CD4-positive, alpha-beta T cell (primary cell): ENCODE measurements at regions of chr19 and their contacts with region 1.

Region 1: DNA sequence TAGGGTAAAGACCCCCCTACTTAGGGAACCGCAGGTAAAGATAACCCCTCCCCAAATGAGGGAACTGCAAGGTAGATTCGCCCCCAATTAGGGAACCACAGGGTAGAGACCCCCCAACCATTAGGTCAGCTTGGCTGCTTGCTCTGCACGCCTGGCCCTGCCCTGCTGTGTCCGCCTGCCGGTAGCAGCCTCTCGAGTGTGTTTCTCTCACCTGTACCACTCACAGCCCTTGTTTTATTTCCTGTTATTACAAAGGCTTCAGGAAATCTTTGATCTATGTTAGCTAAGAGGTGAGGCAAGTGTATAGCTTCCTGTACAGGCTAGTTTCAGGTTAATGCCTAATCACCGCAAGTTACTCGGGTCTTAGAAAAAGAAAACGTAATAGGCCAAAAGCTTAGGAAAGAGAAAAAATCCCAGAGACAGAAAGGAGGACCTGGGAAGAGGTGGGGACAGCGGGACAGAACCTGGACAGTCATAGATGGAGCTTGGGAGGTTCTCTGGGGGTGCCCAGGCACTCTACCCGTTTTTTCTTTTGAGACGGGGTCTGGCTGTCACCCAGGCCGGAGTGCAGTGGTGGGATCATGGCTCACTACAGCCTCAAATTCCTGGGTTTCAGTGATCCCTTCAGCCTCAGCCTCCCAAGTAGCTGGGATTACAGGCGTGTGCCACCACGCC is 23.1 kb upstream of the EIF3G start:
- DNase-seq: peak; percentile 38 to 93 (median 58)
- ATAC-seq: peak; percentile 98
- H3K4me3 ChIP-seq: peak overlapping the region; percentile 36
- H3K4me3 Mint-ChIP-seq: peak overlapping the region; percentile 76
- H3K27ac ChIP-seq: peak overlapping the region; percentile 86 to 90
- H3K27ac Mint-ChIP-seq: peak overlapping the region; percentile 95
- H3K4me1 ChIP-seq: peaks cover 76% of the 10 kb centered on the region
- H3K4me1 Mint-ChIP-seq: peaks cover 36% of the 10 kb centered on the region
- H3K27me3 ChIP-seq: no peaks in the 10 kb centered on the region
- H3K27me3 Mint-ChIP-seq: no peaks in the 10 kb centered on the region
- CTCF ChIP-seq: peak; percentile 32

Region 2: DNA sequence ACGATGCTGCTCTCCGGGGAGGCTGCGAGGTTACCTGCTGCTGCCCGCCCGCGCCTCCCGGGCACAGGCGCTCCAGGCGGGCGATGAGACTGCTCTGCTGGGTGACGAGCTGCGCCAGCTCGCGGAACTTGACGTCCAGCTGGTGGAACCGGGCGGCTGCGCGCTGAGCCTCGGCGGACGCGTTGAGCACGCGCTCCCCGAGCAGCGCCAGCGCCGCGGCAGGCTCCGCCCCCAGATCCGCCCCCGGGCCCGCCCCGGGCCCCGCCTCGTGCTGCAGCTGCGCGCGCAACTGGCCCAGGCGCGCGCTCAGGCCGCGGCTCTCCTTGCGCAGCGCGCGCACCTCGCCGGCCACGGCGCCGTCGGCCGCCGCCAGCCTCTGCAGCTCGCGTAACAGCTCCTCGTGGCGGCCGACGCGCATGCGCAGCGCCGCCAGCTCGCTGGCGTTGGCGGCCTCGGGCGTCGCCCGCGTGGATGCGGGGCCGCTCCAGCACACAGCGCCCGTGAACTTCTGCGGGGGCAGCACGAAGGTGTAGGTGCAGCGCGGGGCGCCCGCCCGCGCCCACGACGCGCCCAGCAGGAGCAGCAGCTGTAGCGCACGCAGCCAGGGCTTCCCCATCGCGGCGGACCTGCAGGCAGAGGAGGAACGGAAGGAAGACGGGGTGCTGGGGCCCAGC is 46.8 kb before region 1 on chr19:
- CTCF ChIA-PET with region 1: interaction called, 3 read pairs
- POLR2A ChIA-PET with region 1: interaction called, 23 read pairs
- intact Hi-C with region 1: no loop called
- DNase-seq: peak; percentile 78 to 98 (median 88)
- ATAC-seq: peak; percentile 88
- H3K4me3 ChIP-seq: peak overlapping the region; percentile 53
- H3K4me3 Mint-ChIP-seq: peak overlapping the region; percentile 65
- H3K27ac ChIP-seq: peak overlapping the region; percentile 48 to 56
- H3K27ac Mint-ChIP-seq: peak overlapping the region; percentile 83
- H3K4me1 ChIP-seq: peaks cover 50% of the 10 kb centered on the region
- H3K4me1 Mint-ChIP-seq: peaks cover 22% of the 10 kb centered on the region
- H3K27me3 ChIP-seq: no peaks in the 10 kb centered on the region
- H3K27me3 Mint-ChIP-seq: no peaks in the 10 kb centered on the region
- CTCF ChIP-seq: no peak

Region 3: DNA sequence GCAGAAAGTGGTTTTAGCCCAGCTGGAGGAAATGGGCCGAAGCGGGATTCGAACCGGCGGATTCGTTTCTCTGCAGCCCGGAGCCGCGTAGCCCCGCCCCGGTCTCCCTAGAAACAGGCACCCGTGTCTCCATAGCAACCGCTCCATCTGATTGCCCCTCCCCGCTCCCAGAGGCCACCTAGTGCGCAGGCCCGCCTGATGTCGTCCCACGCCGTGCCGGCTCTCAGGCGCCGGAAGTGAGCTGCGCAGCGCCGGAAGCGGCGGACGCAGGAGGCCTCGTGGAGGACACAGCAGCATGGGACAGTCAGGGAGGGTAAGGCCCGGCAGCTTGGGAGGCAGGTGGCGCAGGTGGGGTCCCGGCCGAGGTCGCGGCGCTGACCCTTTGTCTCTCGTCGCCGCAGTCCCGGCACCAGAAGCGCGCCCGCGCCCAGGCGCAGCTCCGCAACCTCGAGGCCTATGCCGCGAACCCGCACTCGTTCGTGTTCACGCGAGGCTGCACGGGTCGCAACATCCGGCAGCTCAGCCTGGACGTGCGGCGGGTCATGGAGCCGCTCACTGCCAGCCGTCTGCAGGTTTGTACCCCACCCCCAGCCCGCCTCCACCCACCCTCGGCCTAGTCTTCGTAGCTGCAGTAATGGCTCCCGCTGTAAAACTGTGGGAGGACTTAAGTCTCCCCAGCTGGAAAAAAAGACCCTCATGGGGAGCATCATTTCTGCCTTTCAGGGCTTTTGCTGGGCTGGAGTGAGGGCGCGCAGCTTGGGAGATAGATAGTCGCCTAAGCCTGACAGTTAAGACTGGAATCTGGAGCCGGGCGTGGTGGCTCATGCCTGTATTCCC is 36.5 kb before region 1 on chr19 and contains the start of gene PPAN:
- CTCF ChIA-PET with region 1: no interaction called
- POLR2A ChIA-PET with region 1: interaction called, 22 read pairs
- intact Hi-C with region 1: no loop called
- DNase-seq: peak; percentile 94 to 100 (median 98)
- ATAC-seq: peak; percentile 59
- H3K4me3 ChIP-seq: peak within 1 kb of the TSS; percentile 73
- H3K4me3 Mint-ChIP-seq: peak within 1 kb of the TSS; percentile 93
- H3K27ac ChIP-seq: peak within 1 kb of the TSS; percentile 94 to 98
- H3K27ac Mint-ChIP-seq: peak within 1 kb of the TSS; percentile 95
- H3K4me1 ChIP-seq: peaks cover 86% of the 10 kb centered on the region
- H3K4me1 Mint-ChIP-seq: peaks cover 58% of the 10 kb centered on the region
- H3K27me3 ChIP-seq: no peaks in the 10 kb centered on the region
- H3K27me3 Mint-ChIP-seq: no peaks in the 10 kb centered on the region
- CTCF ChIP-seq: no peak
- total RNA-seq, gene PPAN: 119 to 127 TPM

Region 4: DNA sequence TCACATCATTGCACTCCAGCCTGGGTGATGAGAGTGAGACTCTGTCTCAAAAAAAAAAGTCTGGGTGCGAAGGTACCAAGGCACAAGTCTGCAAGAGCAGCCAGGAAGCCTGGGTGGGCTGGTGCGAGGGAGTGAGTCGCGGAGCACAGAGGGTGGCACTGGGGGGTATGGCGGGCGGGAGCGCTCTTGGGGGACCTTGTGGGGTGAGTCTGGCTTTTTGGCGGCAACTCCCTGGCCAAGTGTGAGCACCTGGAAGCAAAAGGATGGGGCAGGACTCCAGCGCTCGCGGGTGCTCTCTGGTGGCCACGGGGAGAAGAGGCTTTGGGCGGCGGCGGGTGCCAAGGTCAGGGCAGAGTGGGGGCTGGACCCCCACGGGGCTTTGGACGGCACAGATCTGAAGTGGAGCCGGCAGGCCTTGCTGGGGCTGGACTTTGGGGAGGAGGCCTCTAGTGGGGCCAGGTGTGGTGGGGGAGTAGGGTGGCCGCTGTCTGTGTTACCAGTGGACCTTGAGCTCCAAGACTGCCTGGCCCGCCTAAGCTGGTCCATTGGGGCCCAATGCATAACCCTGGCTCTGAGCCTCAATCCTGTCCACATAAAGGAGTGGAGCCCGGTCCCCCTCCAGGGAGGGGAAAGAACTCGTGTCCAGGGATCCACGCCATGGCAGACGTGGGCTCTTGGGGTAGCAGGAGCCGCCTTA is 29.8 kb before region 1 on chr19:
- CTCF ChIA-PET with region 1: no interaction called
- POLR2A ChIA-PET with region 1: interaction called, 28 read pairs
- intact Hi-C with region 1: loop called in 1 of 2 experiments (anchors 2 kb)
- DNase-seq: peak; percentile 43 to 83 (median 62)
- ATAC-seq: peak; percentile 41
- H3K4me3 ChIP-seq: no peak overlapping the region
- H3K4me3 Mint-ChIP-seq: peak overlapping the region; percentile 87
- H3K27ac ChIP-seq: peak overlapping the region; percentile 47 to 63
- H3K27ac Mint-ChIP-seq: peak overlapping the region; percentile 98
- H3K4me1 ChIP-seq: peaks cover 80% of the 10 kb centered on the region
- H3K4me1 Mint-ChIP-seq: peaks cover 32% of the 10 kb centered on the region
- H3K27me3 ChIP-seq: no peaks in the 10 kb centered on the region
- H3K27me3 Mint-ChIP-seq: peaks cover 4% of the 10 kb centered on the region
- CTCF ChIP-seq: peak; percentile 59

Region 5: GRCh38 chr19:10120538-10121189 is 22.2 kb before region 1 on chr19:
- CTCF ChIA-PET with region 1: interaction called, 9 read pairs
- POLR2A ChIA-PET with region 1: interaction called, 28 read pairs
- intact Hi-C with region 1: loop called (anchors 2 kb)
- DNase-seq: no peak
- ATAC-seq: no peak
- H3K4me3 ChIP-seq: no peak overlapping the region
- H3K4me3 Mint-ChIP-seq: no peak overlapping the region
- H3K27ac ChIP-seq: no peak overlapping the region
- H3K27ac Mint-ChIP-seq: no peak overlapping the region
- H3K4me1 ChIP-seq: peaks cover 42% of the 10 kb centered on the region
- H3K4me1 Mint-ChIP-seq: peaks cover 11% of the 10 kb centered on the region
- H3K27me3 ChIP-seq: no peaks in the 10 kb centered on the region
- H3K27me3 Mint-ChIP-seq: no peaks in the 10 kb centered on the region
- CTCF ChIP-seq: no peak

Region 6: GRCh38 chr19:10194500-10195289 is 51.9 kb after region 1 on chr19 and contains the start of gene DNMT1:
- CTCF ChIA-PET with region 1: no interaction called
- POLR2A ChIA-PET with region 1: interaction called, 16 read pairs
- intact Hi-C with region 1: loop called in 1 of 2 experiments (anchors 5 kb)
- DNase-seq: peak; percentile 86 to 98 (median 96)
- ATAC-seq: peak; percentile 93
- H3K4me3 ChIP-seq: peak within 1 kb of the TSS; percentile 99
- H3K4me3 Mint-ChIP-seq: peak within 1 kb of the TSS; percentile 98
- H3K27ac ChIP-seq: peak within 1 kb of the TSS; percentile 77 to 80
- H3K27ac Mint-ChIP-seq: peak within 1 kb of the TSS; percentile 88
- H3K4me1 ChIP-seq: peaks cover 49% of the 10 kb centered on the region
- H3K4me1 Mint-ChIP-seq: peaks cover 32% of the 10 kb centered on the region
- H3K27me3 ChIP-seq: no peaks in the 10 kb centered on the region
- H3K27me3 Mint-ChIP-seq: no peaks in the 10 kb centered on the region
- CTCF ChIP-seq: no peak
- total RNA-seq, gene DNMT1: 159 to 160 TPM